ENCODE measurements at regions of chr1 and their contacts with region 1.

Region 1: DNA sequence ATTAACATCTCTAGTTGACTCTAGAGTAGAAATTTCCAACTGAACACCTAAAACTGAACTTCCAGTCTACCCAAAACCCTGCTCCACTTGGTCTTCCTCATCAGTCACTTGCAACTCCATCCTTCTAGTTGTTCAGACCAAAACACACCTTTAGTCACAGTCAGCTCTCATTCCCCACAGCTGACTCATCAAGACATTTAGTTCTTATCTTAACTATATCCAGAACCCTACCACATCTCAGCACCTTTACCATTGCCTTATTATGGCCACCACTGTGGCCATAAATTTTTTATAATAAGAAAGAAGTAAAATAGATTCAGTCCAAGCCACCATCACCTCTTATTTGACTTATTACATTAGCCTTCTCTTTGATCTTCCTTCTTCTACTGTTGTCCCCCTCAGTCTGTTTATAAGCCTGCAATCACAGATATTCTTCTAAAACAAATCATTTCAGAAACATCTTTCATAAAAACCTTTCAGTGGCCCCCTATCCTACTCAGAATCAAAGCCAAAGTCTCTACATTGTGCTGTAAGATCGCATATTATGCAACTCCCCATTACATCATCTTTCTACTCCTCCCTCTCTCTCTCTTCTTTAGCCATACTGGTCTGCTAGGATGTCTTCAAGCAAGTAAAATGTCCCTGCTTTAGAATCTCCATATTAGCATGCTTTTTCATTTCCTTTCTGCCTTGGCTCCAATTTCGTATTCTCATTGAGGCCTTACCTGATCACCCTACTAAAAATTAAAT is 275.9 kb downstream of the LRRC40 start:
- DNase-seq: no peak
- H3K4me3 ChIP-seq: no peak overlapping the region
- H3K27ac ChIP-seq: no peak overlapping the region
- H3K4me1 ChIP-seq: no peaks in the 10 kb centered on the region
- H3K27me3 ChIP-seq: no peaks in the 10 kb centered on the region
- CTCF ChIP-seq: no peak
- POLR2A ChIP-seq: no peak

Region 2: DNA sequence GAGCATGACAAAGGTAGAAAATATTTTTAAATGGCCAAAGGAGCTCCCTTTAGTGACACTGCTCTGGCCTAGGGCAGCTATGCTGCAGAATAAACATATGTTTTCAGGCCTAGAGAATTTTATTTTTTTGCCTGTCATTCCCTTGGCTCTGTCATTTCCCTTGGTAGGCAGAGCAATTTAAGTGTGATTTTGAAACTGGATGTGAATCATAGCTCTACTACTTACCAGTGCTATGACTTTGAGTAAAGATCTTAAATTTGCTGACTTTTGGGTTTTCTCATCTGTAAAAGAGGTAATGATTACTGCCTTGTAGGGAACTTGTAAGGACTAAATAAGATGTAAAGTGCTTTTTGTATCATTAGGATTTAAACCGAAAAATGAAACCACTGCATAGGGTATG is 1340.3 kb after region 1 on chr1:
- intact Hi-C with region 1: loop called (anchors 5 kb)
- DNase-seq: no peak
- H3K4me3 ChIP-seq: no peak overlapping the region
- H3K27ac ChIP-seq: no peak overlapping the region
- H3K4me1 ChIP-seq: no peaks in the 10 kb centered on the region
- H3K27me3 ChIP-seq: no peaks in the 10 kb centered on the region
- CTCF ChIP-seq: no peak
- POLR2A ChIP-seq: no peak